BJ (cell line): ENCODE measurements at regions of chr7 and their contacts with region 1.

Region 1: DNA sequence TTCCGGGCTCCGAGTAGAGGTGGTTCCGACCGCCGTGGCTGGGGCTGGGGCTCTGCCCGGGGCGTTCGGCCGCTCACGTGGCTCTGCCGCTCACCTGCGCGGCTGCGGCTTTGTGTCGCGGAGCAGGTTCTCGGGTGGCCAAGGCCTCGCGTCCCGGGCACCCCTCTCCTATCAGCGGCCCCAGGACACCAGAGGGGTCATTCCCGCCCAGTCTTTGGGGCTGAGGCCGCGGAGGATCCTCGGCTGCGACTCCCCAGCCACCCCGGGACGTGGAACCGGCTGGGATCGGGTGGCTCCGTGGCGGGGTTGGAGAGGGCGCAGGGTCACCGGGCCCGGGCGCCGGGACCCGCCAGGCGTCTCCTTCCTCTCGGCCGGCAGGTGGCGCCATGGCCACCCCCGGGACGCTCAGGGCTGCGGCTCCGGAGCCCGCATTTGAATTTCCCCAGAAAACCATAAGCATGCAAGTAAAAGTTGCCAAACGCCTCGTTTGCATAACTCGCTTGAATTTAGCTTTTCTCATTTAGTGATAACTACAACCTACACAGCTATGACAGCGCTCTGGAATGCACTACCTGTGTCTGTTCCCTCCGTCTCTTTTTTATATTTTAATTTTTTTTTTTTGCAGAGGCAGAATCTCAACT is 1.2 kb downstream of the COL26A1 start:
- DNase-seq: no peak
- H3K4me3 ChIP-seq: peak overlapping the region; percentile 38
- H3K27me3 ChIP-seq: peaks cover 10% of the 10 kb centered on the region
- CTCF ChIP-seq: peak; percentile 74

Region 2: DNA sequence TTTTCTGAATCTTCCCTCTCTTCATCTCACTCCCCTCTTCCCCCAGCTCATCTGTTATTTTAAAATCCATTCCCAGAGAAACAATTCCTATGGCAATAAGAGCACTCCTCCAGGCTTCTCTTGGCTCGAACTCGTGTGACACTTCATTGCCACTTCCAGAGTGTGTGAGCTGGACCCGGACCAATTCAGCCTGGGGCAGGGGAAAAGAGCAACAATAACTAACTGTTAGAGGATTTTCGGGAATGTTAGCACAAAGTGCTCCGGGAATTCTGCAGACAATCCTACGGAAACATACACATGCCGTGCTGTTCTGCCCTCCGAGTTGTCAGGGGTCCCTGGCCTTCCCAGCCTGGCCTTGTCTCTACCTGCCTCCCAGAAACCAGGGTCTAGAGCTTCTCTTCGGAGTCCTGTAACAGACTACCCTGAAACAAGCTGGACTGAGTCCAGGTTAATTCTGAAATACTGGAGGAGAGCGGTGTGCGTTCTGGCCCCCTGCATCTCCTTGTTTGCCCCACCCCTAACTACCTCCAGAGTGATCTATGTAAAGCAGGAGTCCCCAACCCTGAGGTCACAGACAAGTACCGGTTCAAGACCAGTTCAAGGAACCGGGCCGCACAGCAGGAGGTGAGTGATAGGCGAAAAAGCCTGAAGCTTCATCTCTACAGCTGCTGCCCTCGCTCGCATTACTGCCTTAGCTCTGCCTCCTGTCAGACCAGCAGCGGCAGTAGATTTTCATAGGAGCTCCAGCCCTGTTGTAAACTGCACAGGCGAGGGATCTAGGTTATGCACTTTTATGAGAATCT is 10.2 kb after region 1 on chr7:
- CTCF ChIA-PET with region 1: interaction called, 14 read pairs
- POLR2A ChIA-PET with region 1: no interaction called
- DNase-seq: peak; percentile 38
- H3K4me3 ChIP-seq: no peak overlapping the region
- H3K27me3 ChIP-seq: peaks cover 14% of the 10 kb centered on the region
- CTCF ChIP-seq: no peak

Region 3: GRCh38 chr7:101382937-101383336 is 19.1 kb after region 1 on chr7:
- CTCF ChIA-PET with region 1: interaction called, 11 read pairs
- POLR2A ChIA-PET with region 1: no interaction called
- DNase-seq: no peak
- H3K4me3 ChIP-seq: no peak overlapping the region
- H3K27me3 ChIP-seq: peaks cover 2% of the 10 kb centered on the region
- CTCF ChIP-seq: no peak

Region 4: DNA sequence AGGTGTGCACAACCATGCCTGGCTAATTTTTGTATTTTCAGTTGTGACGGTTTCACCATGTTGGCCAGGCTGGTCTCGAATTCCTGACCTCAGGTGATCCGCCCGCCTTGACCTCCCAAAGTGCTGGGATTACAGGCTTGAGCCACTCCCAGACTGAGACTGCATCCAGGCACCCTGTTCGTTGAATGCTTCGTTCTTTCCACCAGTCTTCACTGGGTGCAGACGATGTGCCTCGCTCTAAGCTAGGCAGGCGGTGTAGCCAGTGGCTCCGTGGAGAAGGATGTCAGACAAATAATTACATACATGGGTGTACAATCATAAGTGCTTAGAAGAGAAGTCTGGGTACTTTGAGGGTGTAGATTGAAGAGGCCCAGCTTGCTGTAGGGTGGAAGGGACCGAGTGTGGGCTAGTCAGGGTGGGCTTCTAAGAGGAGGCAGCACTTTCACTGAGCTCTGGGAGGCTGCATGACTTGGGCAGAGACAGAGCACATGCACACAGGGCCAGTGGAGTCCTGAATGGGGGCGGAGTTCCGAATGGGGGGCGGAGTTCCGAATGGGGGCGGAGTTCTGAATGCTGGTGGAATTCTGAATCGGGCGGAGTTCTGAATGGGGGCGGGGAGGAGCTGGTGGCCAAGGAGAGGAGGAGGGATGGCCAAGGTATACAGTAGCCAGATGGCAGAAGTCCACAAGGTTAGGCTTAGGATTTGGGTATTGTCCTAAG is 73.2 kb after region 1 on chr7:
- CTCF ChIA-PET with region 1: interaction called, 12 read pairs
- POLR2A ChIA-PET with region 1: no interaction called
- DNase-seq: no peak
- H3K4me3 ChIP-seq: no peak overlapping the region
- H3K27me3 ChIP-seq: peaks cover 27% of the 10 kb centered on the region
- CTCF ChIP-seq: no peak

Region 5: DNA sequence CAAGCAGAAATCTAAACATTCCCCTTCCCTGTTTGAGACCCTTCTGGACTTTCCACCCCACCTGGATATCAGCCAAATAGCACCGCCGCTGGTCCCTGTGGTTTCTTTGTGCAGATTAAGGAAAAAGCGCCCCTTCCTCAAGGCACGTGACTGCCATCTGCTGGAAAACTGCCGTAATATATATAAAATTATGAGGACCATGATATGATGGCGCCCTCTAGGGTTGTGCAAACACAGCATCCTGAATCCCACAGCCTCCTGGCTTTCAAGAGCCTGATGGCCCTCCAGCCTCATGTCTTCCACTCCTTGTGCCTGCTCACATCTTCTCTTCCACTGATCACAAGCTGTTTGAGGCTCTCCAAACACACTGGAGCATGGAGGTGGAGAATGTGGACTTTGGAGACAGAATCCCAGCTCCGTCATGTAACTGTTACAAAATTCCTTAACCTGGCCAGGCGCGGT is 144.0 kb after region 1 on chr7:
- CTCF ChIA-PET with region 1: interaction called, 33 read pairs
- POLR2A ChIA-PET with region 1: no interaction called
- DNase-seq: no peak
- H3K4me3 ChIP-seq: no peak overlapping the region
- H3K27me3 ChIP-seq: peaks cover 9% of the 10 kb centered on the region
- CTCF ChIP-seq: peak; percentile 83

Region 6: DNA sequence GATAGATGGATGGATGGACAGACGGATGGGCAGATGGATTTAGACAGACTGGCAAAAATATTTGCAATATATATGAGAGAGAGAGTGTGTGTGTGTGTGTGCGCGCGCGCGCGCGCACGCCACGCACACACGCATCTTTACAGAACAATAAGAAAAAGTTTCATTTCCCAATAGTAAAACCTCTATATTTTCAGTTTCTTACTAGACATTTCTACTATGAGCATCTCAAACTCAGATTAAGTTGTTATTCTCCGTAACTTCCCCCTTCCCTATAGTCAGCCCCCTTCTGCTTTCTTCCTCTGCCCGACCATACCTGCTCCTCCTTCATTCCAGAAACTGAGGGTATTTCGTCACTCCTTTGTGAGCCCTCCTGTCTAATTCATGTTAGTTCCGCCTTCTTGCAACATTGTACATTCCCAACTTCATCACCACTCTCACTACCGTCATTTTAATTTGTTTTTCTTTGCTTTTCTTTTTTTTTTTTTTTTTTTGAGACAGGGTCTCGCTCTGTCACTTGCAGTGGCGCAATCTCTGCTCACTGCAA is 768.4 kb after region 1 on chr7:
- CTCF ChIA-PET with region 1: no interaction called
- POLR2A ChIA-PET with region 1: no interaction called
- DNase-seq: no peak
- H3K4me3 ChIP-seq: no peak overlapping the region
- H3K27me3 ChIP-seq: no peaks in the 10 kb centered on the region
- CTCF ChIP-seq: no peak